Activated naive CD4-positive, alpha-beta T cell treated with anti-CD3 and anti-CD28 coated beads for 36 hours (primary cell): ENCODE measurements at regions of chr1 and their contacts with region 1.

Region 1: DNA sequence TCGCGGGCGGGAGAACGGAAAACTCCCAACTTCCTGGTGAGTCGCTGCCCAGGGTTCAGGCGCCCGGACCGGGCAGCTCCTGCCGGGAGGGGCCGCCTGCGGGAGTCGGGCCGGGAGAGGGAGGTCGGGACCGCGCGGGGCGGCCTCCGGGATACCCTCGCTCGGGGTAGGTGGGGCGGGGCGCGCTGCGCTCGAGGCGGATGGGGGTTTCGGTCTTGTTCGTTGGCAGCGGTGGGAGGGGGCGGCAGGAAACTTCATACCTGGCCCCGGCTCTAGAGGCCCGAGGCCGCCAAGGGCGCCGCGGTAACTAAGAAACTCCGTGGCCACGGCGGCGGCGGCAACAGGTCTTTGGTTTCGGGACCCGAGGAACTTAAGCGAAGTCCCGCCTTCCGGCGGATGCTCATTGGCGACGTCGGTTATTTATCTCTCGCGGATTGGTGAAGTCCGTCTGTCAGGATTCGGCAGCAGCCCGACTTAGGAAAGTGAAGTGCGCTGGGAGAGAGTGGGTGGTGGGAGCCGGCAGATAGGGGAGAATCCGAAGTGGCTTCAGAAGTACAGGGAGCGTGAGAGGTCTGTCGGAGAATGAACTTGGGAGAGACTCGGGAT is 546 bp downstream of the NEK7 start:
- DNase-seq: peak; percentile 84
- H3K4me3 Mint-ChIP-seq: peak overlapping the region; percentile 100
- H3K27ac Mint-ChIP-seq: peak overlapping the region; percentile 98
- H3K4me1 Mint-ChIP-seq: peaks cover 30% of the 10 kb centered on the region
- H3K27me3 Mint-ChIP-seq: no peaks in the 10 kb centered on the region

Region 2: GRCh38 chr1:197775282-197776262 is 381.8 kb before region 1 on chr1 and contains the start of gene DENND1B:
- CTCF ChIA-PET with region 1: no interaction called
- intact Hi-C with region 1: loop called (anchors 2 kb)
- DNase-seq: peak; percentile 84
- H3K4me3 Mint-ChIP-seq: peak within 1 kb of the TSS; percentile 74
- H3K27ac Mint-ChIP-seq: peak within 1 kb of the TSS; percentile 99
- H3K4me1 Mint-ChIP-seq: peaks cover 64% of the 10 kb centered on the region
- H3K27me3 Mint-ChIP-seq: no peaks in the 10 kb centered on the region
- total RNA-seq, gene DENND1B: 8.9 to 9.7 TPM

Region 3: DNA sequence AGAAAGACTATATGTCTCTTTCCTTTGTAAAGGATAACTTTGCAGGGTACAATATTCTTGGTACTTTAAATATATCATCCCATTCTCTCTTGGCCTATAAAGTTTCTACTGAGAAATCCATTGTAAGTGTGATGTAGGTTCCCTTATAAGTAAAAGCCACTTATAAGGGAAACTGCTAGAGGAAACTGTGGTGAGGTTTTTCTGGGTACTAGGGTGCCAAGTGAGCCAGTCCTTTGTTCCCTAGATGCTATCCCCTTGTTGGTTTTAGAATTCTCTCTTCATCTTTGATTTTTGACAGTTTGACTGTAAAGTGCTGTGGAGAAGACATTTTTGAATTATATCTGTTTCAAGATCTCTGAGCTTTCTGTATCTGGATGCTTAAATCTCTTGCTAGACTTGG is 109.4 kb before region 1 on chr1:
- CTCF ChIA-PET with region 1: no interaction called
- intact Hi-C with region 1: no loop called
- DNase-seq: no peak
- H3K4me3 Mint-ChIP-seq: no peak overlapping the region
- H3K27ac Mint-ChIP-seq: no peak overlapping the region
- H3K4me1 Mint-ChIP-seq: peaks cover 9% of the 10 kb centered on the region
- H3K27me3 Mint-ChIP-seq: no peaks in the 10 kb centered on the region

Region 4: GRCh38 chr1:198088360-198089071 is 68.8 kb before region 1 on chr1:
- CTCF ChIA-PET with region 1: interaction called, 10 read pairs
- intact Hi-C with region 1: loop called (anchors 1 kb)
- DNase-seq: peak; percentile 26
- H3K4me3 Mint-ChIP-seq: no peak overlapping the region
- H3K27ac Mint-ChIP-seq: no peak overlapping the region
- H3K4me1 Mint-ChIP-seq: peaks cover 7% of the 10 kb centered on the region
- H3K27me3 Mint-ChIP-seq: no peaks in the 10 kb centered on the region

Region 5: DNA sequence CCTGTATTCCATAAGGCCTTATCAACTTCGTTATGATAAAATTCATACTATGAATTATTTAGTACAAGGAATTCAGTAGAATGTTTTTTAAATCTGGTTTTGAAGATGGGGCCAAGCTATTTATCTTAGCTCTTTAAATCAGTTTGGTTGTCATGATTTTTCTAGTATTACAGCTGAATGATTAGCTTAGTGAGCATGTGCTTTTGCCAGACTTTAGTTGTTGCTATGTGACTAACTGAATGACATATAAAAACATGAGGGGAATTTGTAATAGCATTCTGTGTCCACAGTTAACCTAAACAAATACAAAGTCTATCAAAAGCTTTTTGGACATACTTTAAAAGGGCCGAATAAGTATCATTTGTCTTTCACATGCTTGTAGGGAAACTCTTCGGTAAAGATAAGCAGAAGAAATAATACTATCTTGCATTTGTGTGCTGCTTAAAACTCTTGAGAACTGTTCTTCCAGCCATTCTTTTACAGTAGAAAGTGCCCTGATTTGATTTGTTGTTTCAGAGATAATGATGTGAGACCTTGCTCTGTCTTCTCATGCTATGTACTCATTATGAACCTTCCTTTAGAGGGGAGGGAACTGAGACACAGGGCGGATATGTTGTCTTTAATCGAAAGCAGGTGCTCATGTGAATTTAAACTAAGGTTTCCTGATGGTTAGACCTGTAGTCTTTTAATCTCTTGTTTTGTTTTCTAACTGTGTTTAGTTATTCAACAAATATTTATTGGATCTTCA is 18.3 kb after region 1 on chr1:
- CTCF ChIA-PET with region 1: interaction called, 9 read pairs
- intact Hi-C with region 1: loop called (anchors 1 kb)
- DNase-seq: peak; percentile 43
- H3K4me3 Mint-ChIP-seq: peak overlapping the region; percentile 34
- H3K27ac Mint-ChIP-seq: peak overlapping the region; percentile 80
- H3K4me1 Mint-ChIP-seq: peaks cover 91% of the 10 kb centered on the region
- H3K27me3 Mint-ChIP-seq: no peaks in the 10 kb centered on the region

Region 6: DNA sequence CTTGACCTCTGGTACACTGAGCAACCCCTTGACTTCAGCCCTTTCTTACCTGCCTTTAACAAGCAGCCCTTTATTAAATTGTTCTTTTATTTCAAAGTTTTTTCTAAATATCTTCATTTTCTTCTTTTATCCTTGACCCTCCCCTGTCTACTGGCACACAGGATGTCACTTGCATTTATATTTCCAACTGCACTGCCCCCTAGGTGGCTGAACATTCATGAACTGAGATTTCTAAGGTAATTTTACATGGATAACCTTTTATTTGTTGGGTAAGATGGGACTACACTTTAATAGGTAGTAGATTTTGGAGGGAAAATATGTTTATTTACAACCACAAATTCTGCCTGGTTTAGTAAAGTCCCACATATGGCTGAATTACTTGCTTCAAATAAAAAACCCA is 193.1 kb after region 1 on chr1:
- CTCF ChIA-PET with region 1: interaction called, 5 read pairs
- intact Hi-C with region 1: loop called (anchors 2 kb)
- DNase-seq: peak; percentile 20
- H3K4me3 Mint-ChIP-seq: no peak overlapping the region
- H3K27ac Mint-ChIP-seq: no peak overlapping the region
- H3K4me1 Mint-ChIP-seq: peaks cover 3% of the 10 kb centered on the region
- H3K27me3 Mint-ChIP-seq: no peaks in the 10 kb centered on the region

Region 7: GRCh38 chr1:198681831-198682759 is 524.8 kb after region 1 on chr1:
- CTCF ChIA-PET with region 1: interaction called, 3 read pairs
- intact Hi-C with region 1: loop called (anchors 2 kb)
- DNase-seq: peak; percentile 86
- H3K4me3 Mint-ChIP-seq: peak overlapping the region; percentile 61
- H3K27ac Mint-ChIP-seq: peak overlapping the region; percentile 99
- H3K4me1 Mint-ChIP-seq: peaks cover 86% of the 10 kb centered on the region
- H3K27me3 Mint-ChIP-seq: no peaks in the 10 kb centered on the region